ENCODE measurements at regions of chr1 and their contacts with region 1.

Region 1: DNA sequence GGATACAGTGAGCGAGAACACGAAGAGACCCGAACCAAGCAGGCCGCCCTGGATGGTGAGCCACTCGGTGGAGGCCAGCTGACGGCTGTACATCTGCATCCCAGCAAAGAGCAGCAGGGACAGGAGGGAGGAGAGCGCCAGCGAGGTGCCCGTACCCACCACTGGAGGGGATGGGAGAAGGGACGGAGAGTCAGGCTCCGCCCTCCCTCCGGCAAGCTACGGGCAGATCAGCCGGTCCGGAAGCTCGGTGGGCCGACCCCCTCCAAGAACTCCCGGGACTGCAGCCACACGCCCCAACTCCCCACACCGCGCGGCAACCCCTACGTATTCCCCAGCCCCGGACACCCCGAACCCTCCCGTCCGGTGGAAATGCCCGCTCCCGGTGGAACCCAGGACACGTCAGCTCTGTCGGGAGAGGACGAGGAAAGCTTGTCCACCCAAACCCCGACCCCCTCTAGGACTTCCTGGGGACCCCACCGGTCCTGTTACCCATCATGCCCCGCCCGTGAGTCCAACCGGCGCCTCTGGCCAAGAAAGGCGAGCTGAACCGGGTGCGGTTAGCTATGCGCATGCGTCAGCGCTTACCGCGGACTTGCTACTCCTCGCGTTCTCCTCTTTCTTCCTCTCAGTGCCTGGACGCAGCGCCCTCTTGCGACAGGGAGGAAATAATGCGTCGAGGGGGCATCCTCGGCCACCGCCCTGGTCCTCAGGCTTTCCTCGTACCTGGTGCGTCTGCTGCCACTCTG is at the start of gene KRTCAP2:
- DNase-seq: peak; percentile 96
- H3K4me3 Mint-ChIP-seq: peak within 1 kb of the TSS; percentile 96
- H3K27ac Mint-ChIP-seq: peak within 1 kb of the TSS; percentile 83
- H3K4me1 Mint-ChIP-seq: peaks cover 45% of the 10 kb centered on the region
- H3K27me3 Mint-ChIP-seq: peaks cover 21% of the 10 kb centered on the region
- CTCF ChIP-seq: peak; percentile 89
- total RNA-seq, gene KRTCAP2: 236 TPM in 2 replicates

Region 2: GRCh38 chr1:155022927-155023236 is 150.0 kb before region 1 on chr1:
- CTCF ChIA-PET with region 1: no interaction called
- intact Hi-C with region 1: no loop called
- DNase-seq: no peak
- H3K4me3 Mint-ChIP-seq: no peak overlapping the region
- H3K27ac Mint-ChIP-seq: no peak overlapping the region
- H3K4me1 Mint-ChIP-seq: peaks cover 61% of the 10 kb centered on the region
- H3K27me3 Mint-ChIP-seq: no peaks in the 10 kb centered on the region
- CTCF ChIP-seq: no peak

Region 3: GRCh38 chr1:155091071-155091709 is 81.7 kb before region 1 on chr1:
- CTCF ChIA-PET with region 1: interaction called, 68 read pairs
- intact Hi-C with region 1: loop called (anchors 1 kb)
- DNase-seq: peak; percentile 91
- H3K4me3 Mint-ChIP-seq: peak overlapping the region; percentile 29
- H3K27ac Mint-ChIP-seq: no peak overlapping the region
- H3K4me1 Mint-ChIP-seq: peaks cover 10% of the 10 kb centered on the region
- H3K27me3 Mint-ChIP-seq: peaks cover 21% of the 10 kb centered on the region
- CTCF ChIP-seq: peak; percentile 97

Region 4: GRCh38 chr1:155117617-155118016 is 55.3 kb before region 1 on chr1:
- CTCF ChIA-PET with region 1: interaction called, 17 read pairs
- intact Hi-C with region 1: no loop called
- DNase-seq: no peak
- H3K4me3 Mint-ChIP-seq: no peak overlapping the region
- H3K27ac Mint-ChIP-seq: no peak overlapping the region
- H3K4me1 Mint-ChIP-seq: peaks cover 7% of the 10 kb centered on the region
- H3K27me3 Mint-ChIP-seq: peaks cover 43% of the 10 kb centered on the region
- CTCF ChIP-seq: no peak

Region 5: DNA sequence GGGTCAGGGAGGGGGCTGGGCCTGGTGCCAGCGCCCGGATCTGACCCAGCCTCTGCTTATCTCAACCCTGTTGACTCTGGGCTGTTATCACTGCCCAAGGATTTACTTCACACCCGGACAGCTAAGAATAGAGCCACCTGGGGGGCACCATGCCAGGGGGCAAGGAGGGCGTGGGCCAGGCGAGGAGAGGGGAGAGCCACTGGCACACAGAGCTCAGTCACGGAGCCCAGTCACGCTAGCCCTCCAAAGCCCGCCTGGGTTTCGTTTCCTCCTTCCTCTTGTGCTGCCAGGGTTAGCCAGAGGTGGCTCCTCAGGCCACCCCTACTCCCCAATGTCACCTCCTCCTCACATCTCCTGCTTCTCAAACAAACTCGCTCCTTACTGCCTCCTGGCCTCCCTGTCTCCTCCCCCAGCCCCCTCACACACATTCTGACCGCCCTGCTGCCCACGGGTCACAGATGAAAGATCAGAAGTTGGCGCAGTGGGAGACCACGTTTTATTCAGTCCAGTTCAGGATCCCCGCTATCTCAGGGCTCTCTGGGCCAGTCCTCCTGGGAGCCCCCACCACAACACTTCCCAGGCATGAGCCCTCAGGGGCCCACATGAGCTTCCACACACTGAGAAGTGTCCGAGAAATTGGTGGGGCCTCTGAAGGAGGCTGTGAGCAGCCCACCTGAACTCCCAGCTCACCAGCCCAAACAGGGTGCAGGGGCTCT is 12.6 kb after region 1 on chr1:
- CTCF ChIA-PET with region 1: interaction called, 19 read pairs
- intact Hi-C with region 1: no loop called
- DNase-seq: peak; percentile 58
- H3K4me3 Mint-ChIP-seq: no peak overlapping the region
- H3K27ac Mint-ChIP-seq: no peak overlapping the region
- H3K4me1 Mint-ChIP-seq: peaks cover 37% of the 10 kb centered on the region
- H3K27me3 Mint-ChIP-seq: peaks cover 57% of the 10 kb centered on the region
- CTCF ChIP-seq: no peak

Region 6: GRCh38 chr1:155193275-155193990 is 20.5 kb after region 1 on chr1:
- CTCF ChIA-PET with region 1: interaction called, 25 read pairs
- intact Hi-C with region 1: loop called (anchors 2 kb)
- DNase-seq: peak; percentile 95
- H3K4me3 Mint-ChIP-seq: peak overlapping the region; percentile 79
- H3K27ac Mint-ChIP-seq: peak overlapping the region; percentile 74
- H3K4me1 Mint-ChIP-seq: peaks cover 27% of the 10 kb centered on the region
- H3K27me3 Mint-ChIP-seq: peaks cover 49% of the 10 kb centered on the region
- CTCF ChIP-seq: peak; percentile 97

Region 7: GRCh38 chr1:155227261-155228095 is 54.6 kb after region 1 on chr1:
- CTCF ChIA-PET with region 1: interaction called, 7 read pairs
- intact Hi-C with region 1: loop called (anchors 1 kb)
- DNase-seq: peak; percentile 99
- H3K4me3 Mint-ChIP-seq: peak overlapping the region; percentile 72
- H3K27ac Mint-ChIP-seq: peak overlapping the region; percentile 70
- H3K4me1 Mint-ChIP-seq: peaks cover 12% of the 10 kb centered on the region
- H3K27me3 Mint-ChIP-seq: peaks cover 10% of the 10 kb centered on the region
- CTCF ChIP-seq: no peak

Measured in Calu3 (cell line).